Activated CD4-positive, alpha-beta T cell treated with anti-CD3 and anti-CD28 coated beads for 36 hours (primary cell): ENCODE measurements at regions of chr11 and their contacts with region 1.

Region 1: GRCh38 chr11:47578524-47579460 is at the starts of genes KBTBD4 and NDUFS3:
- DNase-seq: peak; percentile 92
- ATAC-seq: peak; percentile 96
- H3K4me3 Mint-ChIP-seq: peak within 1 kb of the TSS; percentile 87
- H3K27ac Mint-ChIP-seq: peak within 1 kb of the TSS; percentile 93
- H3K4me1 Mint-ChIP-seq: peaks cover 39% of the 10 kb centered on the region
- H3K27me3 Mint-ChIP-seq: no peaks in the 10 kb centered on the region
- total RNA-seq, gene KBTBD4: 11.9 to 18.4 TPM
- total RNA-seq, gene NDUFS3: 96.9 to 108 TPM

Region 2: GRCh38 chr11:46936138-46937110 is 642.4 kb before region 1 on chr11 and contains the start of gene CSTPP1:
- CTCF ChIA-PET with region 1: no interaction called
- POLR2A ChIA-PET with region 1: no interaction called
- intact Hi-C with region 1: loop called in 1 of 2 experiments (anchors 1 kb)
- DNase-seq: peak; percentile 97
- ATAC-seq: peak; percentile 96
- H3K4me3 Mint-ChIP-seq: peak within 1 kb of the TSS; percentile 86
- H3K27ac Mint-ChIP-seq: peak within 1 kb of the TSS; percentile 88
- H3K4me1 Mint-ChIP-seq: peaks cover 16% of the 10 kb centered on the region
- H3K27me3 Mint-ChIP-seq: peaks cover 5% of the 10 kb centered on the region
- total RNA-seq, gene CSTPP1: 17.9 to 18.6 TPM

Region 3: DNA sequence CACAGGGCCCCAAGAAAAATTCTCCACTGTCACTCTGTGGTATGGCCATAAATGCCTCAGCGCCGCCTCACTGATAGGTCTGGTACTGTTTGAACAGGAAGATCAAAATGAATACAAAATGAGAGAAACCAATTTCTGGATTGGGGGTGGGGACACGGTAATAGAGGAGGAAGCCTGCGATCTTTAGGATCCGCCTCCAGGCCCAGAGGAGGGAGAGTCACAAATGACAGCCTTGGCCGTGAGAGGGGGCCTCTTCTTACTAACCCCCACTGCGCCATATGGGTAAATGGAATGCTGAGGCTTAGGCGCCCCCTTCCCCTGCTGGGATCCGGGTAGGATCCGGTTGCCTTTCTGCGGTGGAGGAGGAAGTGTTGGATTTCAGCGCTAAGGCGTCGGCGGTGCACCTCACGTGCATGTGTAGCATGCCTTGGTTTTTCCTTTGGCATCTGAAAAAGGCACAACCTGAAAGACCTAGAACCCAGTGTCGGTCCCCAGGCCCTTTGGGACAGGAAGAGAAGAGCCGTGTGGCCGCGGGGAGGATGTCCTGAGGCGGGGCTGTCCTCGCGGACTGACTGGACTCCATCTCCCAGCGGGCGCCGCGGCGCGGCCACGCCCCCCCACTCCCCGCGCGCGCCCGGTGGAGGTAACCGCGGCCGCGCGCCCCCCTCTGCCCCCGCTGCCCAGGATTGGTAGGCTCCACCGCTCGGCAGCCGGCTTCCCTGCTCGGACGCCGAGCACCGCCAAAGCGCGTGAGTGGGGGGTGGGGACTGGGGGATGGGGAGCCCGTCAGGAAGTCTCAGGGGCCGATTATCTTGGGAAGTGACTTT is 309.6 kb before region 1 on chr11:
- CTCF ChIA-PET with region 1: no interaction called
- POLR2A ChIA-PET with region 1: no interaction called
- intact Hi-C with region 1: loop called in 1 of 2 experiments (anchors 1 kb)
- DNase-seq: peak; percentile 93
- ATAC-seq: peak; percentile 61
- H3K4me3 Mint-ChIP-seq: peak overlapping the region; percentile 76
- H3K27ac Mint-ChIP-seq: peak overlapping the region; percentile 98
- H3K4me1 Mint-ChIP-seq: peaks cover 60% of the 10 kb centered on the region
- H3K27me3 Mint-ChIP-seq: no peaks in the 10 kb centered on the region

Region 4: DNA sequence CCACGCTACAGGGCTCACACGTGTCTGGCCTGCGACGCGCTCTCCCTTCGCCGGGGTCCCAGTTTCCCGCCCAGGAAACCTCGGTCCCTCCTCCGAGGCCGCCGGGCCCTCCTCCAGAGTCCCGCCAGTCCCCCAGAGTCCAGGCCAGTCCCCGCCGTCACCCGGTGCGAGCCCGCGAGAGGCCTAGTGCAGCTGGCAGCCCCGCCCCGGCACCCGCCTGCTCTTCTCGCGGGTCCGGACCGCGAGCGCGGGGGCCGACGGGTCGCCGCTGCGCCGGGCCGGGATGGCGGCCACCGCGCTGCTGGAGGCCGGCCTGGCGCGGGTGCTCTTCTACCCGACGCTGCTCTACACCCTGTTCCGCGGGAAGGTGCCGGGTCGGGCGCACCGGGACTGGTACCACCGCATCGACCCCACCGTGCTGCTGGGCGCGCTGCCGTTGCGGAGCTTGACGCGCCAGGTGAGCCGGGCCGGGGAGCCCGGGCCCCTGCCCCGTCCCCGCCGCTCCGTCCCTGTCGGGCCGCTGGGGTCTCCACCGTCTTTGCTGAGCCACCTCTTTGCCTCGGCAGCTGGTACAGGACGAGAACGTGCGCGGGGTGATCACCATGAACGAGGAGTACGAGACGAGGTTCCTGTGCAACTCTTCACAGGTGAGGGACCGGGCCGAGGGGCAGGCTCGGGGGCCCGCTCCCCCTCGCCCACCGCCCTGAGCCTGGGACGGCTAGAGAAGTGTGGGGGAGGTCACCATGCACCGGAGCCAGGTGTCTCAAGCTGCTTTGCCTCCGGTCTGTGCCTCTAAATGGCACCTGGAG is 13.2 kb before region 1 on chr11 and contains the start of gene PTPMT1:
- CTCF ChIA-PET with region 1: interaction called, 4 read pairs
- POLR2A ChIA-PET with region 1: interaction called, 14 read pairs
- intact Hi-C with region 1: loop called in 1 of 2 experiments (anchors 1 kb)
- DNase-seq: peak; percentile 85
- ATAC-seq: peak; percentile 95
- H3K4me3 Mint-ChIP-seq: peak within 1 kb of the TSS; percentile 82
- H3K27ac Mint-ChIP-seq: peak within 1 kb of the TSS; percentile 82
- H3K4me1 Mint-ChIP-seq: peaks cover 28% of the 10 kb centered on the region
- H3K27me3 Mint-ChIP-seq: no peaks in the 10 kb centered on the region
- total RNA-seq, gene PTPMT1: 35.6 to 41.5 TPM

Region 5: GRCh38 chr11:47689480-47689879 is 110.7 kb after region 1 on chr11:
- CTCF ChIA-PET with region 1: no interaction called
- POLR2A ChIA-PET with region 1: no interaction called
- intact Hi-C with region 1: no loop called
- DNase-seq: no peak
- ATAC-seq: no peak
- H3K4me3 Mint-ChIP-seq: no peak overlapping the region
- H3K27ac Mint-ChIP-seq: no peak overlapping the region
- H3K4me1 Mint-ChIP-seq: no peaks in the 10 kb centered on the region
- H3K27me3 Mint-ChIP-seq: no peaks in the 10 kb centered on the region

Region 6: GRCh38 chr11:47847892-47848635 is 269.3 kb after region 1 on chr11 and contains the start of gene NUP160:
- CTCF ChIA-PET with region 1: interaction called, 3 read pairs
- POLR2A ChIA-PET with region 1: no interaction called
- intact Hi-C with region 1: loop called (anchors 1 to 5 kb)
- DNase-seq: peak; percentile 94
- ATAC-seq: peak; percentile 88
- H3K4me3 Mint-ChIP-seq: peak within 1 kb of the TSS; percentile 90
- H3K27ac Mint-ChIP-seq: peak within 1 kb of the TSS; percentile 99
- H3K4me1 Mint-ChIP-seq: peaks cover 44% of the 10 kb centered on the region
- H3K27me3 Mint-ChIP-seq: no peaks in the 10 kb centered on the region
- total RNA-seq, gene NUP160: 67.1 to 84.5 TPM